IMR-90 (cell line): ENCODE measurements at regions of chr15 and their contacts with region 1.

Region 1: DNA sequence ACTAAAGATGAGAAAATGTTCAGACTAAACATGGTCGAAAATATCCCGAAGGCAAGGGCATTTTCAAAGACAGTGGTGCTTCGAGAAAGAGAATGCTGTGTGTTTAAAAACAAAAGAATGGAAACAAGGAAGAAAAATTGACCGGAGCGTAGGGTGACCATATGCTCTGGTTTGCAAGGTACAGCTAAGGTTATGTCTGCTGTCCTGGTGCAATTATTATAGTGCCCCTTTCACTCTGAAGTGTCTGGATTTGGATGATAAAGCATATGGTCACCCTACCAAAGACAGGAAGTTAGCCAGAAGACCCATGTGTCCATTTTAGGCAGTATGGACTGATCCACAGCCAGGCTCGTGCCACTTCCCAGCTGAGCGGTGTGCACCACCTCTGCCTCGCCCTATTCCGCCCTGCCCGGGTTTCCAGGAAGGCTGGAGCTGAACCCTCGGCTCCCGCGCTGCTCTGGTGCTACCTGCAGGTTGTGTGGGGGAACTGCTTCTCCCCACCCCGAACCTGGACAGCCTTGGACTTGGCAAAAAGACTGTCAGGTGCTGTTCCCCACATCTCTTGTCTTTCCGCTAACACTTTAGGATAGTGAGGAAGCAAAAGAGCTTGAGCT is 25.2 kb downstream of the GOLGA6D start:
- DNase-seq: no peak
- ATAC-seq: peak; percentile 63
- H3K4me3 ChIP-seq: no peak overlapping the region
- H3K27ac ChIP-seq: no peak overlapping the region
- H3K4me1 ChIP-seq: no peaks in the 10 kb centered on the region
- H3K27me3 ChIP-seq: peaks cover 49% of the 10 kb centered on the region
- CTCF ChIP-seq: 0 out of 2 replicates have a peak, but pooled peaks have one; percentile 20
- POLR2A ChIP-seq: no peak
- RAD21 ChIP-seq: peak; percentile 42

Region 2: DNA sequence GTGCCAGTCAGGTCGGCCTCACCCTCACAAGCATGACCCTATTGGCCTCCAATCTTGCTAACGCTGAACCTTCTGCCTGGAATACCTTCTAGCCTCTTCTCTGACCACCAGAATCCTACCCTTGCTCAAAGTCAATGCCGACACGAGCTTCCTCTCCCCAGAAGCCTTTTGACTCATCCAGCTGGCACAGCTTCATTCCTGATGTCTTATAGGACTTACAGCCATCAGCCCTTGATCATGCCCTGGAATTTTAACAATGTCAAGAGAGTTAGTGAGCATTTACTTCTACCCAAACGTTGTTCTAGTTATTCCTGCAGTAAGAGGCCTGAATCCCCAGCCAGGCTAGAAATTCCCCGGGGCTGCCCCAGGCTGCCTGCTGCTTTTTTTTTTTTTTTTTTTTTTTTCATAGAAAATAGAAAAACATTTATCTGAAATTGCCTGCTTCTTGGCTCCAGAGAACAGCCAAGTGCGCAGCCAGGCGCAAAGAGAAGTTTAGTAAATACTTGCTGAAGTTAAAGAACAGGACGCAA is 555.3 kb before region 1 on chr15:
- CTCF ChIA-PET with region 1: no interaction called
- POLR2A ChIA-PET with region 1: no interaction called
- dilution Hi-C with region 1: no loop called
- in situ Hi-C with region 1: no loop called
- intact Hi-C with region 1: no loop called
- DNase-seq: peak; percentile 34
- ATAC-seq: peak; percentile 75
- H3K4me3 ChIP-seq: no peak overlapping the region
- H3K27ac ChIP-seq: no peak overlapping the region
- H3K4me1 ChIP-seq: no peaks in the 10 kb centered on the region
- H3K27me3 ChIP-seq: peaks cover 35% of the 10 kb centered on the region
- CTCF ChIP-seq: no peak
- POLR2A ChIP-seq: no peak
- RAD21 ChIP-seq: no peak

Region 3: DNA sequence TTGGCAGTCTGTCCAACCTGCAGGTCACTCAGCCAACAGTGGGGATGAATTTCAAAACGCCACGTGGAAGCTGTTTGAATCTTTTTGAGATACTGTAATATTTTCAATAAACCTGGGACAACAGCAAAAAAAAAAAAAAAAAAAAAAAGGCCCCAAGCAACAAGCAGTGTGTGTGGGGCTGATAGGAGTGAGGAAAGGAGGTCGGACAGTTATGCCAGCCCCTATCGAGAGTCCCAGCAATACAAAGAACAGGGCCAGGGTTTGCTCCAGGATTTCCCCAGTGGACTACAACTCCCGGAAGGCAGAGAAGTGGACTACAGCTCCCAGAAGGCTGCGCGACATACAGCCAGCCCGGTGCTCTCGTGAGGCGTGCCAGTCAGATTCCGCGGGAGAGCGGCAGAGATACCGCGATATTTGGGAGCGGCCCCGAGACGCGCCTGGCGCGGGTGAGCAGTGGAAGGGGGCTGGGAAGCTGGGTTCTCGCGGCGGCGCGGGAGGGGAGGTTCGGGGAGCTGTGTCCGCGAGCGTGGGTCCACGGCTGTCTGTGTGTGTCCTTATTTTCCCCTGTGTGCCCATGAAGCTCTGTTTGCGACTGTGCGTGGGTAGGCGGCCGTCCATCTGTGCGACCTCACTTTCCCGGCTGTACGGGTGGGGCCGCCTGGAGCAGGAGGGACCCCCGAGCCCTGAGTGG is 284.6 kb before region 1 on chr15 and contains the start of gene PPCDC:
- CTCF ChIA-PET with region 1: no interaction called
- POLR2A ChIA-PET with region 1: no interaction called
- dilution Hi-C with region 1: no loop called
- in situ Hi-C with region 1: no loop called
- intact Hi-C with region 1: loop called (anchors 10 kb)
- DNase-seq: peak; percentile 92
- ATAC-seq: peak; percentile 100
- H3K4me3 ChIP-seq: peak within 1 kb of the TSS; percentile 64
- H3K27ac ChIP-seq: peak within 1 kb of the TSS; percentile 75
- H3K4me1 ChIP-seq: peaks cover 2% of the 10 kb centered on the region; the same call in 1 of the 2 replicates
- H3K27me3 ChIP-seq: peaks cover 1% of the 10 kb centered on the region; the same call in 1 of the 2 replicates
- CTCF ChIP-seq: no peak
- POLR2A ChIP-seq: peak; percentile 84
- RAD21 ChIP-seq: no peak
- total RNA-seq, gene PPCDC: 5.6 and 13.3 TPM in 2 replicates

Region 4: DNA sequence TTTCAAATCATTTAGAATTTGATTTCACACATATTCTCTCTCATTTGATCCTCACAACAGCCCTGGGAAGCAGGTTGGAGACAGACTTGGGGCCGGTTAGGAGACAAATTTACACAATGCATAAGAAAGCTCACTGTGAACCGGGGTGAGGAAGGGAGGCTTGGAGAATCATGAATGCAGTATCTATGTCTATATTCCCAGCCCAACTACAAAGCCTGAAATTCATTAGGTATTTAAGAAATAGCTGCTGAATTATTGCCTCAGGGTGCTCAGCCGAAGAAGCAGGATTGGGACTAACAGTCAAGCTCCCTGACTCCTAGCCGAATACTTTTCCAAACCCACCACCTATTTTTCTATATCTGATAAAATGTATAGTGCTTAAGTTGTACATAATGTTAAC is 58.2 kb before region 1 on chr15:
- CTCF ChIA-PET with region 1: no interaction called
- POLR2A ChIA-PET with region 1: no interaction called
- dilution Hi-C with region 1: no loop called
- in situ Hi-C with region 1: no loop called
- intact Hi-C with region 1: loop called (anchors 10 kb)
- DNase-seq: no peak
- ATAC-seq: no peak
- H3K4me3 ChIP-seq: no peak overlapping the region
- H3K27ac ChIP-seq: no peak overlapping the region
- H3K4me1 ChIP-seq: no peaks in the 10 kb centered on the region
- H3K27me3 ChIP-seq: peaks cover 44% of the 10 kb centered on the region
- CTCF ChIP-seq: no peak
- POLR2A ChIP-seq: no peak
- RAD21 ChIP-seq: no peak